ENCODE measurements at regions of chr9 and their contacts with region 1.

Region 1: DNA sequence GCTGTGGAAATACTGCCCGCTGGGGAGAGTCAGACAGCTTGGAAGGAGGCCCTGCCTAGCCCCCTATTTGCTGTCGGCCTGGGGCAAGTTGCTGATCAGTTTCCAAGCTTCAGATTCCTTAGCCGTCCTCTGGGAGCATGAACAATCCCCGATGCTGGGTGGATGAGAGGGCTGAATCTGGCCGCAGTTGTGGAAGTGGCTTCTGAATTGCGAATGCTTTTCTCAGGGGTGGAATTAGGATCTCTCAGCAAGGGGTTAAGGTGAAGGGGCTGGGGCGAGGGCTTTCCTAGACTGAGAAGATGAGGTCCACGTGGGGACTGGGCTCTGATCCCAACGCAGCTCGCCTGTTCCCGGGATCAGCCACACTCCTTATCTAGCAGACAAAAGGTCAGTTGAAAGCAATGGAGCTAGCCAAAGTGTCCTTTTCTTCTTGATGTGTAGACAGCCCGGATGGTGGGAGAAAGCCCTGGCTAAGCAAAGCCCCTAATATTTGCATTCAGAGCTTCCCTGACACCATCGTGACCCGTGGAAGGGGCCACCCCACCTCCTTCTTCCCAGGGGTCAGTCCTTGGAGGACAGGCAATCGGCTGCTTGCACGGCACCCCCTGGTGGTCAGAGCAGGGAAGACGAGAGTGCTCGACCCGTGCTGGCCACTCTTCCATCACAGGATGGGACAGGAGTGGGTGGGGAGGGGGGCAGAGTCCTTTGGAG is 54.9 kb downstream of the COL15A1 start:
- DNase-seq: peak in 8 of 9 experiments; percentile 17 to 67 (median 60)
- ATAC-seq: peak; percentile 59
- H3K4me3 ChIP-seq: no peak overlapping the region
- H3K4me3 Mint-ChIP-seq: no peak overlapping the region
- H3K27ac ChIP-seq: no peak overlapping the region
- H3K27ac Mint-ChIP-seq: no peak overlapping the region
- H3K4me1 ChIP-seq: peaks cover 19% of the 10 kb centered on the region
- H3K4me1 Mint-ChIP-seq: peaks cover 17% of the 10 kb centered on the region
- H3K27me3 ChIP-seq: no peaks in the 10 kb centered on the region
- H3K27me3 Mint-ChIP-seq: no peaks in the 10 kb centered on the region
- CTCF ChIP-seq: peak; percentile 62

Region 2: GRCh38 chr9:98848450-98849149 is 150.0 kb before region 1 on chr9:
- CTCF ChIA-PET with region 1: interaction called, 9 read pairs
- POLR2A ChIA-PET with region 1: no interaction called
- intact Hi-C with region 1: loop called in 1 of 2 experiments (anchors 2 kb)
- DNase-seq: peak; percentile 47 to 83 (median 76)
- ATAC-seq: peak; percentile 90
- H3K4me3 ChIP-seq: no peak overlapping the region
- H3K4me3 Mint-ChIP-seq: no peak overlapping the region
- H3K27ac ChIP-seq: no peak overlapping the region
- H3K27ac Mint-ChIP-seq: no peak overlapping the region
- H3K4me1 ChIP-seq: no peaks in the 10 kb centered on the region
- H3K4me1 Mint-ChIP-seq: peaks cover 3% of the 10 kb centered on the region
- H3K27me3 ChIP-seq: no peaks in the 10 kb centered on the region
- H3K27me3 Mint-ChIP-seq: no peaks in the 10 kb centered on the region
- CTCF ChIP-seq: peak; percentile 95

Region 3: GRCh38 chr9:98935071-98935505 is 63.5 kb before region 1 on chr9:
- CTCF ChIA-PET with region 1: no interaction called
- POLR2A ChIA-PET with region 1: no interaction called
- intact Hi-C with region 1: no loop called
- DNase-seq: no peak
- ATAC-seq: no peak
- H3K4me3 ChIP-seq: no peak overlapping the region
- H3K4me3 Mint-ChIP-seq: no peak overlapping the region
- H3K27ac ChIP-seq: no peak overlapping the region
- H3K27ac Mint-ChIP-seq: no peak overlapping the region
- H3K4me1 ChIP-seq: no peaks in the 10 kb centered on the region
- H3K4me1 Mint-ChIP-seq: no peaks in the 10 kb centered on the region
- H3K27me3 ChIP-seq: no peaks in the 10 kb centered on the region
- H3K27me3 Mint-ChIP-seq: peaks cover 41% of the 10 kb centered on the region
- CTCF ChIP-seq: no peak

Region 4: GRCh38 chr9:99012942-99013512 is 14.4 kb after region 1 on chr9:
- CTCF ChIA-PET with region 1: interaction called, 89 read pairs
- POLR2A ChIA-PET with region 1: interaction called, 9 read pairs
- intact Hi-C with region 1: loop called in 1 of 2 experiments (anchors 1 kb)
- DNase-seq: peak in 4 of 9 experiments; percentile 25 to 68 (median 52)
- ATAC-seq: peak; percentile 73
- H3K4me3 ChIP-seq: peak overlapping the region in 1 of 2 experiments; percentile 24
- H3K4me3 Mint-ChIP-seq: peak overlapping the region; percentile 74
- H3K27ac ChIP-seq: peak overlapping the region; percentile 35 to 81
- H3K27ac Mint-ChIP-seq: peak overlapping the region; percentile 95
- H3K4me1 ChIP-seq: peaks cover 20% of the 10 kb centered on the region
- H3K4me1 Mint-ChIP-seq: peaks cover 32% of the 10 kb centered on the region
- H3K27me3 ChIP-seq: no peaks in the 10 kb centered on the region
- H3K27me3 Mint-ChIP-seq: no peaks in the 10 kb centered on the region
- CTCF ChIP-seq: peak; percentile 42

Region 5: GRCh38 chr9:99076483-99077171 is 78.0 kb after region 1 on chr9:
- CTCF ChIA-PET with region 1: interaction called, 11 read pairs
- POLR2A ChIA-PET with region 1: interaction called, 3 read pairs
- intact Hi-C with region 1: no loop called
- DNase-seq: peak in 8 of 9 experiments; percentile 46 to 85 (median 64)
- ATAC-seq: peak; percentile 98
- H3K4me3 ChIP-seq: no peak overlapping the region
- H3K4me3 Mint-ChIP-seq: peak overlapping the region; percentile 33
- H3K27ac ChIP-seq: peak overlapping the region in 1 of 2 experiments; percentile 47
- H3K27ac Mint-ChIP-seq: peak overlapping the region; percentile 84
- H3K4me1 ChIP-seq: peaks cover 23% of the 10 kb centered on the region
- H3K4me1 Mint-ChIP-seq: peaks cover 54% of the 10 kb centered on the region
- H3K27me3 ChIP-seq: no peaks in the 10 kb centered on the region
- H3K27me3 Mint-ChIP-seq: no peaks in the 10 kb centered on the region
- CTCF ChIP-seq: no peak

Region 6: GRCh38 chr9:99118782-99119466 is 120.3 kb after region 1 on chr9:
- CTCF ChIA-PET with region 1: interaction called, 15 read pairs
- POLR2A ChIA-PET with region 1: no interaction called
- intact Hi-C with region 1: no loop called
- DNase-seq: peak in 8 of 9 experiments; percentile 32 to 83 (median 62)
- ATAC-seq: peak; percentile 96
- H3K4me3 ChIP-seq: peak overlapping the region; percentile 15 to 36
- H3K4me3 Mint-ChIP-seq: peak overlapping the region; percentile 61
- H3K27ac ChIP-seq: peak overlapping the region; percentile 28 to 38
- H3K27ac Mint-ChIP-seq: peak overlapping the region; percentile 83
- H3K4me1 ChIP-seq: peaks cover 86% of the 10 kb centered on the region
- H3K4me1 Mint-ChIP-seq: peaks cover 91% of the 10 kb centered on the region
- H3K27me3 ChIP-seq: no peaks in the 10 kb centered on the region
- H3K27me3 Mint-ChIP-seq: no peaks in the 10 kb centered on the region
- CTCF ChIP-seq: no peak

Region 7: GRCh38 chr9:99130069-99130468 is 131.5 kb after region 1 on chr9:
- CTCF ChIA-PET with region 1: interaction called, 374 read pairs
- POLR2A ChIA-PET with region 1: interaction called, 4 read pairs
- intact Hi-C with region 1: no loop called
- DNase-seq: no peak
- ATAC-seq: no peak
- H3K4me3 ChIP-seq: no peak overlapping the region
- H3K4me3 Mint-ChIP-seq: peak overlapping the region; percentile 38
- H3K27ac ChIP-seq: peak overlapping the region in 1 of 2 experiments; percentile 38
- H3K27ac Mint-ChIP-seq: peak overlapping the region; percentile 85
- H3K4me1 ChIP-seq: peaks cover 88% of the 10 kb centered on the region
- H3K4me1 Mint-ChIP-seq: peaks cover 86% of the 10 kb centered on the region
- H3K27me3 ChIP-seq: no peaks in the 10 kb centered on the region
- H3K27me3 Mint-ChIP-seq: no peaks in the 10 kb centered on the region
- CTCF ChIP-seq: no peak

Measured in CD8-positive, alpha-beta T cell (primary cell).